Activated B cell treated with CpG ODN at 0.5 μM for 24 hours (primary cell): ENCODE measurements at regions of chr12 and their contacts with region 1.

Region 1: DNA sequence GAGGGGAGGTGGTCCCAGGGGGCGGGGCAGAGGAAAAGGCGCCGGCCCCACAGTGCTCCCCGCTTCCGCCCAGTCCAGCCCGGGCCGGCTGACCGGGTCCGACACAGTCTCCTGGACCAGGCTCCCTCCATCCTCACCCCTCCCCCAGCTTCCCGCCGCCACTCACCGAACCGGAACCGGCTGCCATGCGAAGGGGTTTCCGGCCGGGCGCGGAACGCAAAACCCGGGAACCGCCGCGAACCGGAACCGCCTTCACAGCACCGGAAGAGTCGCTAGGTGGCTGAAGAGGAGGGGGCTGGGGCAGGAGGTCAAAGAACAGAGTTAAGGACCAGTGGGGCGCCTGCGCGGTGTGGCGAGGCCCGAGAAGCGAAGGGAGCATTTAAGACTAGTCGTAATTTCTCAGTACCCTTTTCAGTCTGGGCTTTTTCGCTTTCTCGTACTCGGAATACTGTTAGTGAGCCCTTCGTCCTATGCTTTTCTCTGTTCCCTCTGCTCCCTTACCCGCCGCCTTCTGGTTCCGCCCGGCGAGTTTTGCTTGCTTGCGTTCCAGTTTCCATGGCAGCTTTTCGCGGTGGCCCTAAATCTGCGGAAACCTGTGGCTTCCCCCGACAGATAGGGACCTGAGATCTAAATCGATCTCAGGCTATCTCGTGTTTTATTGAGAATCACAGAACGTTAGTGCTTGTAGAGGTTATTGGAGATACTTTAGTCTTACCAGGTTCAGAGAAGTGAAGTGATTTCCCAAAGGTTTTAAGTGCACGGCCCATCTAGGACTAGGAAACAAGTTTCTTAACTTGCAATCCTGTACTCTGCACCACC is at the start of gene SENP1:
- DNase-seq: peak; percentile 87
- ATAC-seq: peak; percentile 78
- H3K4me3 Mint-ChIP-seq: peak within 1 kb of the TSS; percentile 95
- H3K27ac Mint-ChIP-seq: peak within 1 kb of the TSS; percentile 98
- H3K4me1 Mint-ChIP-seq: peaks cover 49% of the 10 kb centered on the region
- H3K27me3 Mint-ChIP-seq: no peaks in the 10 kb centered on the region
- CTCF ChIP-seq: no peak
- total RNA-seq, gene SENP1: 42.8 and 43.2 TPM in 2 replicates

Region 2: DNA sequence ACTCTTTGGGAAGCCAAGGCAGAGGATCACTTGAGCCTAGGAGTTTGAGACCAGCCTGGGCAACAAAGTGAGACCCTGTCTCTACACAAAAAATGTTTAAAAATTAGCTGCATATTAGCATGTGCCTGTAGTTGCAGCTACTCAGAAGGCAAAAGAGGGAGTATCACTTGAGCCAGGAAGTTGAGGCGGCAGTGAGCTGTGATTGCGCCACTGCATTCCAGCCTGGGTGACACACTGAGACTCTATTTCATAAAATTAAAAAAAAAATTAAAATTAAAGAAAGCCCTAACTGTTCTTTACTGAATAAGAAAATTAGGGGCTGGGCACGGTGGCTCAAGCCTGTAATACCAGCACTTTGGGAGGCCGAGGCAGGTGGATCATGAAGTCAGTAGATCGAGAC is 27.2 kb before region 1 on chr12:
- CTCF ChIA-PET with region 1: no interaction called
- POLR2A ChIA-PET with region 1: no interaction called
- intact Hi-C with region 1: no loop called
- DNase-seq: no peak
- ATAC-seq: no peak
- H3K4me3 Mint-ChIP-seq: no peak overlapping the region
- H3K27ac Mint-ChIP-seq: no peak overlapping the region
- H3K4me1 Mint-ChIP-seq: no peaks in the 10 kb centered on the region
- H3K27me3 Mint-ChIP-seq: no peaks in the 10 kb centered on the region
- CTCF ChIP-seq: no peak

Region 3: DNA sequence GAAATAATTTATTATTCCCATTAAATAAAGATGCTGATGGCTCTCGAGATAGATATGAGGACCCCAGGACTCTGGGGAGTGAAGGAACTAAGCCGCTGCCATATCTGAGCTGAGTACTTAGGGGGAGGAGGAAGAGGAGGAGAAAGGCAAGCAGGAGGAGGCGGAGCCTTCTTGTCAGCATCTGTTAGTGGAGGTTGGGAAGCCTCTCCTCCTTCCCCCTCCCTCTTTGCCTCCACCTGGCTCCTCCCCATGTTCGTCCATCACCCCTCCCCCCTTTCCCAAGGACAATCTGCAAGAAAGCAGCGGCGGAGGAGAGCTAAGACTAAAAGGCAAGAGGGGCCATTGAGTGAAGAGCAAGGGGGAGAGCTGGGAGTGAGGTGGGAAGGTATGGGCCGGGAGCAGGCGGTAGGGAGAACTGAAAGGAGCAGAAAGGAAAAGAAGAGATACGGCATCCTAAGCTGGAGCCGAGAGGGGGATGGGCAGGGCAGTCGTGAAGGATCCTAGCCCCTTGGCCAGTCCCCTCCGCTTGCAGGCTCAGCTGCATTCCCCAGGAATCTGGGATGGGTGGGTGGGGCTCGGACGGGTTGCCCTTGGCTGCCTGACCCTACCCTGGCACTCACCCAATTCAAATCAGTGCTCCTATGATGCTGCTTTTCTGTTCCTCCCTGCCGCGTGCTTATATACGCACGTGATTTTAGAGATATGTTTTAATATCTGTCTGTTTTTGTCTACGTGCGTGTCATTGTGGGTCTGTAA is 13.2 kb after region 1 on chr12 and contains the start of gene PFKM:
- CTCF ChIA-PET with region 1: interaction called, 5 read pairs
- POLR2A ChIA-PET with region 1: interaction called, 26 read pairs
- intact Hi-C with region 1: loop called (anchors 1 kb)
- DNase-seq: peak; percentile 43
- ATAC-seq: peak; percentile 97
- H3K4me3 Mint-ChIP-seq: peak within 1 kb of the TSS; percentile 99
- H3K27ac Mint-ChIP-seq: peak within 1 kb of the TSS; percentile 87
- H3K4me1 Mint-ChIP-seq: peaks cover 21% of the 10 kb centered on the region
- H3K27me3 Mint-ChIP-seq: no peaks in the 10 kb centered on the region
- CTCF ChIP-seq: no peak
- total RNA-seq, gene PFKM: 44.7 and 49.2 TPM in 2 replicates

Region 4: GRCh38 chr12:48165094-48165981 is 59.3 kb after region 1 on chr12:
- CTCF ChIA-PET with region 1: interaction called, 3 read pairs
- POLR2A ChIA-PET with region 1: no interaction called
- intact Hi-C with region 1: loop called (anchors 2 kb)
- DNase-seq: no peak
- ATAC-seq: peak; percentile 73
- H3K4me3 Mint-ChIP-seq: no peak overlapping the region
- H3K27ac Mint-ChIP-seq: no peak overlapping the region
- H3K4me1 Mint-ChIP-seq: no peaks in the 10 kb centered on the region
- H3K27me3 Mint-ChIP-seq: peaks cover 12% of the 10 kb centered on the region
- CTCF ChIP-seq: peak; percentile 69

Region 5: GRCh38 chr12:48183091-48183875 is 77.2 kb after region 1 on chr12 and contains the start of gene CCDC184:
- CTCF ChIA-PET with region 1: no interaction called
- POLR2A ChIA-PET with region 1: interaction called, 9 read pairs
- intact Hi-C with region 1: loop called (anchors 1 kb)
- DNase-seq: peak; percentile 69
- ATAC-seq: peak; percentile 76
- H3K4me3 Mint-ChIP-seq: peak within 1 kb of the TSS; percentile 92
- H3K27ac Mint-ChIP-seq: peak within 1 kb of the TSS; percentile 60
- H3K4me1 Mint-ChIP-seq: peaks cover 32% of the 10 kb centered on the region
- H3K27me3 Mint-ChIP-seq: peaks cover 27% of the 10 kb centered on the region
- CTCF ChIP-seq: no peak
- total RNA-seq, gene CCDC184: 0.18 and 0.29 TPM in 2 replicates

Region 6: DNA sequence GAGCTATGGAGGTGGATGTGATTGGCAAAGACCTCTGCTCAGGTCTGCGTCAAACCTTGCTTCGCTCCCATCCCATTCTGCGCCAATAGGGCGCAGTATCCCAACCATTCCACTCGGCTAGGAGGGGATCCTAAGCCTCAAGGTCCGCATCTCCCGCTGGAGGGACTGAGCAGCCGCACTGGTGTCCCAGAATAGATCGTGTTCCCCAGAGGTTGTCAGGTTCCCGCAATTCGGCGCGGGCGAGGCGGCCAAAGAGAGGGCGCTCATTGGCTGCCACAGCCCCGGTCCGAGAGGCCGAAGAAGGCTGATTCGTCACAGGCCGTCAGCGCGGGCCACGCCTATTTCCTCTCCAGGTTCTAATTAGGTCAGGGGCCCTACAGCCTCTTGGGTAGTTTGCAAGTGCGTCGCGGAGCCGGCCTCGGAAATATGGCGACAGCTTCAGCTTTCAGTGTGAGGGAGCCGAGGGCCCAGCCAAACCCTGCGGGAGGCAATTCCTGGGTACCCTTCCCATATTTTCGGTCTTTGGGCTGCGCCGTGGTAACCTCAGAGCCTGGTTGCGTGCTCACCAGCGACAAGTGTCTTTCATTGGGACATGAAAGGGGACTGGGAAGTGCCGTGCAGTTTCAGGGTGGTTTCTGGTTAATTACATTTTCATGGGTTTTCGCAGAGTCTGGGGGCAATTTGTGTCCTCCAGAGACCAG is 92.0 kb after region 1 on chr12:
- CTCF ChIA-PET with region 1: no interaction called
- POLR2A ChIA-PET with region 1: interaction called, 8 read pairs
- intact Hi-C with region 1: loop called (anchors 1 kb)
- DNase-seq: peak; percentile 84
- ATAC-seq: peak; percentile 98
- H3K4me3 Mint-ChIP-seq: peak overlapping the region; percentile 96
- H3K27ac Mint-ChIP-seq: peak overlapping the region; percentile 99
- H3K4me1 Mint-ChIP-seq: peaks cover 26% of the 10 kb centered on the region
- H3K27me3 Mint-ChIP-seq: peaks cover 17% of the 10 kb centered on the region
- CTCF ChIP-seq: no peak

Region 7: DNA sequence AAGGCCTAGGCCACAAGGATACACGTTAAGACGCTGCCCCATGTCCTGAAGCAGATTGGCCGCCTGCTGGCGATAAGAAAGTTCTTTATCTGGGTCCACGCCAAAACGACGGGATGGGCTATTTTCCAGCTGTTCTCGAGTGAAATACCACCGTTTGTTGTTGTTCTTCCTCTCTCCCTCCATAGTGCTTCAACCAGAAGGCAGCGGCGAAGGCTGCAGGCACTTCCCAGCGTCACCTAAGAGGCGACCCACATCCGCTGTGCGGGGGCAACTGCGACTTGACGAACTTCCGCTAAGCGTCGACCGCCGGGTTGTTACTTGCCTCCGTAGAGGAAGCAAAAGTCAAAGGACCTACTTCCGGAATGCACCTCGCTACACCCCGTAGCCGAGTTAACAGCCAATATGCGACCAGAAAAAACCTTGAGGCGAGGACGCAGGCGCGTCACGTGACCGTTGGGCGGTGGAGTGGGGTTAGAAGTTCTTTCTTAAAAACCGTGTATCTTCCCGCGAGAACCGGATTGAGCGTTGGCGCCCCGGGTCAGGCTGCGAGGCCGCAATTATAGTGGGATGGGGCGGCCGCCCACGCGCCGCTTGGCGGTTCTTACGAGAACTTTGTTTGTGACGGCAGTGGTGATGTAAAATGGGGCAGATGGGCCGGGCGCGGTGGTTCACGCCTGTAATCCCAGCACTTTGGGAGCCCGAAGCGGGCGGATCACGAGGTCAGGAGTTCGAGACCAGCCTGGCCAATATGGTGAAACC is 610.6 kb after region 1 on chr12 and contains the start of gene CCNT1:
- CTCF ChIA-PET with region 1: no interaction called
- POLR2A ChIA-PET with region 1: no interaction called
- intact Hi-C with region 1: loop called (anchors 2 kb)
- DNase-seq: peak; percentile 92
- ATAC-seq: peak; percentile 91
- H3K4me3 Mint-ChIP-seq: peak within 1 kb of the TSS; percentile 87
- H3K27ac Mint-ChIP-seq: peak within 1 kb of the TSS; percentile 97
- H3K4me1 Mint-ChIP-seq: peaks cover 39% of the 10 kb centered on the region
- H3K27me3 Mint-ChIP-seq: peaks cover 2% of the 10 kb centered on the region
- CTCF ChIP-seq: no peak
- total RNA-seq, gene CCNT1: 48.9 and 49.6 TPM in 2 replicates